Spleen (tissue), 13 donors: ENCODE measurements at regions of chr1 and their contacts with region 1.

Region 1: GRCh38 chr1:8560611-8561544 is 243.0 kb downstream of the SLC45A1 start:
- DNase-seq: no peak
- H3K4me3 ChIP-seq: no peak overlapping the region
- H3K27ac ChIP-seq: peak overlapping the region in 2 of 8 donors; percentile 32 to 45
- H3K4me1 ChIP-seq: peaks cover 18 to 46% (median 36%) of the 10 kb centered on the region in 6 donors
- H3K27me3 ChIP-seq: no peaks in the 10 kb centered on the region
- CTCF ChIP-seq: peak; percentile 81 to 98 (median 94)
- POLR2A ChIP-seq: no peak

Region 2: DNA sequence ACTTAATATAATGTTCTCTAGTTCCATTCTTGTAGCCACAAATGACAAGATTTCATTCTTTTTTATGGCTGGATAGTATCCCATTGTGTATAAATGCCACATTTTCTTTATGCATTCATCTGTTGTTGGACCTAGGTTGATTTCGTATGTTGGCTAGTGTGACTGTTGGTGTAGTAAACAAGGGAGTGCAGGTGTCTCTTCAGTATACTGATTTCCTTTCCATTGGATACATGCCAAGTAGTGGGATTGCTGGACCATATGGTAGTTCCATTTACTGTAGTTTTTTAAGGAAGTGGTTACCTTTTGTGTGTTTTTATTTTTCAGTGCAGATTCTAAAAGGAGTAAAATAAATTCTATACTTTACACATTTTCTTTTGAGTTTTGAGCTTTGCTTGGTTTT is 593.7 kb before region 1 on chr1:
- intact Hi-C with region 1: no loop called
- DNase-seq: no peak
- H3K4me3 ChIP-seq: no peak overlapping the region
- H3K27ac ChIP-seq: no peak overlapping the region
- H3K4me1 ChIP-seq: peaks cover 10 to 78% (median 58%) of the 10 kb centered on the region in 6 donors
- H3K27me3 ChIP-seq: no peaks in the 10 kb centered on the region
- CTCF ChIP-seq: no peak
- POLR2A ChIP-seq: no peak

Region 3: DNA sequence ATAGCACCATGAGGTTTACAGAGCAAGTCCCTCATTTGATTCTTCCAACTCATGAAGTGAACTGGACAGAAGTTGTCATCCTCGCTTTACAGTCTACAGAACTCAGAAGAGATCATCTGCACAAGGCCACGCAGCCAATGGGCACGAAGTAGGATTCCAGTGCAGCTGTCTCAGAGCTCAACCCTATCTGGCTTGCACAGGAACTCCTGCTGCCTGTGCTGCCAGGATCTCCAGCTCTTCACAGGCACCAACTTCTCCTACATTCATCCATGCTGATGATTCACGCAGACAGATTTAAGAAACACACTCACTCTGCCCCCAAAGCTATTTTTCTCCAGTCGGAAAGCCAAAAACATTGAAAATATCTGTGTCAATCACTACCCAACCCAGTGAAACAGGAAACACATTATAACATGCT is 99.5 kb after region 1 on chr1:
- intact Hi-C with region 1: no loop called
- DNase-seq: no peak
- H3K4me3 ChIP-seq: peak overlapping the region in 1 of 8 donors; percentile 23
- H3K27ac ChIP-seq: peak overlapping the region; percentile 32 to 82 (median 72)
- H3K4me1 ChIP-seq: peaks cover 47 to 77% (median 70%) of the 10 kb centered on the region in 6 donors
- H3K27me3 ChIP-seq: no peaks in the 10 kb centered on the region
- CTCF ChIP-seq: no peak
- POLR2A ChIP-seq: no peak

Region 4: GRCh38 chr1:8671306-8671917 is 110.5 kb after region 1 on chr1:
- intact Hi-C with region 1: loop called (anchors 5 kb)
- DNase-seq: no peak
- H3K4me3 ChIP-seq: no peak overlapping the region
- H3K27ac ChIP-seq: no peak overlapping the region
- H3K4me1 ChIP-seq: peaks cover 31 to 85% (median 53%) of the 10 kb centered on the region in 6 donors
- H3K27me3 ChIP-seq: no peaks in the 10 kb centered on the region
- CTCF ChIP-seq: peak; percentile 61 to 83 (median 78)
- POLR2A ChIP-seq: no peak

Region 5: GRCh38 chr1:8727809-8728213 is 166.9 kb after region 1 on chr1:
- intact Hi-C with region 1: loop called (anchors 5 kb)
- DNase-seq: no peak
- H3K4me3 ChIP-seq: no peak overlapping the region
- H3K27ac ChIP-seq: no peak overlapping the region
- H3K4me1 ChIP-seq: peaks cover 0 to 31% (median 16%) of the 10 kb centered on the region in 6 donors
- H3K27me3 ChIP-seq: no peaks in the 10 kb centered on the region
- CTCF ChIP-seq: no peak
- POLR2A ChIP-seq: no peak